Activated CD4-positive, alpha-beta T cell treated with anti-CD3 and anti-CD28 coated beads, Interleukin-2, amount 10 ng/mL, durations not matched to agents 24 days and 14 days (primary cell): ENCODE measurements at regions of chr13 and their contacts with region 1.

Region 1: GRCh38 chr13:94416454-94417080 is 62.9 kb downstream of the DCT start:
- DNase-seq: no peak
- H3K4me3 Mint-ChIP-seq: no peak overlapping the region
- H3K27ac Mint-ChIP-seq: peak overlapping the region; percentile 39
- H3K4me1 Mint-ChIP-seq: peaks cover 21% of the 10 kb centered on the region
- H3K27me3 Mint-ChIP-seq: no peaks in the 10 kb centered on the region

Region 2: DNA sequence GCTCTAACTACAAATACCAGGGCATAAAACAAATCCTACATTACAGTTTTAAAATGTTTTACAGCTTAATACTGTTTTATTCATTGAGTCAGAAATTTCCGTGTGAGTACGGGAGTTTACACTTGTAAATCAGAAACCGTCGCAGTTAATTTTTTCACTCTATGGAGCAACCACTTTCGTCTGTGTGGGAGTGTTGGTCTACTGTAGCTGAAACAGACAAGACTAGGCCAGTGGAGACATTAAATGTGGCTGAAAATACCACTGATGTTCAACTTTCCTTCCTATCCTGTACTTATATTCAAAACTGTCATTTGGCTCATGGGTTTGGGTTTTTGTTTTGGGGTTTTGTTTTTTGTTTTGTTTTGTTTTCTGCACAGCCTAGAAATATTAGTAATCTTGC is 205.8 kb before region 1 on chr13:
- intact Hi-C with region 1: no loop called
- DNase-seq: no peak
- H3K4me3 Mint-ChIP-seq: no peak overlapping the region
- H3K27ac Mint-ChIP-seq: no peak overlapping the region
- H3K4me1 Mint-ChIP-seq: no peaks in the 10 kb centered on the region
- H3K27me3 Mint-ChIP-seq: peaks cover 2% of the 10 kb centered on the region

Region 3: DNA sequence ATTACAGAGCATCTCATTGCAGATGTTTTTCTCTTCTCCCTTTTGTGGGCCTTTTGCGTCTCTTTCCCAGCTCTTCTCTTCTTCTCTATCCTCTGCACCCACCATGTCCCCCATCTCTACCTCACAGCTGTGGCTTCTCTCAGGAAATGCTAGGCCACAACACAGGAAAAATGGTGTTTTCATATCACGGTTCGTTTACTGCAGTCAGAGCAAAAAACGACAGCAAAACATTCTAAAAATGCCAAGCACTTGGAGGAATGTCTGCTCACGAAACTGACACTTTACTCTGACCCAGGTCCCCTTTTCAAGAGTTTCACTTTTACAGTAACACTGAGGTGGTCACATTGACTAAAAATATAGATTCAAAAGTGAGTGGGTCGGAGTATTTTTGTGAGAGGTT is 89.2 kb before region 1 on chr13:
- intact Hi-C with region 1: loop called (anchors 2 kb)
- DNase-seq: peak; percentile 74
- H3K4me3 Mint-ChIP-seq: peak overlapping the region; percentile 62
- H3K27ac Mint-ChIP-seq: peak overlapping the region; percentile 72
- H3K4me1 Mint-ChIP-seq: peaks cover 65% of the 10 kb centered on the region
- H3K27me3 Mint-ChIP-seq: peaks cover 2% of the 10 kb centered on the region

Region 4: GRCh38 chr13:94382517-94382916 is 34.0 kb before region 1 on chr13:
- intact Hi-C with region 1: no loop called
- DNase-seq: no peak
- H3K4me3 Mint-ChIP-seq: no peak overlapping the region
- H3K27ac Mint-ChIP-seq: no peak overlapping the region
- H3K4me1 Mint-ChIP-seq: no peaks in the 10 kb centered on the region
- H3K27me3 Mint-ChIP-seq: peaks cover 4% of the 10 kb centered on the region

Region 5: DNA sequence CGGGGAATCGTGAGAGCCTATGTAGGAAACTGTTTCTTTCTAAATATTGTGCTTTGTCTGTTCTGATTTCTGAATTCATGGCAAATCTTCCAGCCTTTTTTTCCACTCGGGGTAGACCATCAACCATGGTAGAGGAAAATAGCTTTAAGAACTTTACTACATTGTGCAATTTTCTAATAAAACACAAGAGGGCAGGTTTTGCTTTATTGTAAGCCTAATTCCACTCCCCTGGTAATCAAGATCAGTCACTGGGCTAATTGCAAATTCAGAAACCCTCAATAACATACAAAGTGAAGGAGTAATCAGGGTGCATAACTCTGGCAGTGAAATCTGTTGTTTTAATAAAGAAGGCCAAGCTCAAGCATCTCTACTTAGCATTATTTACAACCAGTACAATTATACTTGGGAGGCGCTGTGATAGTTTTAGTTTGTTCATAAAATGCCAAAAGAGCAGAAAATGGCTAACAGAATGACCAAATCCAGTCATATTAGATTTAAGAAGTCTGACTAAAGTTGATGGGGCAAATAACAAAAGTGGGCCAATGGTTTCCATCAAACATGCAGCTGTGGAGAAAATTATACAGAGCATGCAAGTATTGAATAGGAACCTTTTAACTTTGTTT is 19.1 kb after region 1 on chr13:
- intact Hi-C with region 1: loop called (anchors 2 kb)
- DNase-seq: peak; percentile 63
- H3K4me3 Mint-ChIP-seq: no peak overlapping the region
- H3K27ac Mint-ChIP-seq: no peak overlapping the region
- H3K4me1 Mint-ChIP-seq: peaks cover 9% of the 10 kb centered on the region
- H3K27me3 Mint-ChIP-seq: peaks cover 6% of the 10 kb centered on the region

Region 6: DNA sequence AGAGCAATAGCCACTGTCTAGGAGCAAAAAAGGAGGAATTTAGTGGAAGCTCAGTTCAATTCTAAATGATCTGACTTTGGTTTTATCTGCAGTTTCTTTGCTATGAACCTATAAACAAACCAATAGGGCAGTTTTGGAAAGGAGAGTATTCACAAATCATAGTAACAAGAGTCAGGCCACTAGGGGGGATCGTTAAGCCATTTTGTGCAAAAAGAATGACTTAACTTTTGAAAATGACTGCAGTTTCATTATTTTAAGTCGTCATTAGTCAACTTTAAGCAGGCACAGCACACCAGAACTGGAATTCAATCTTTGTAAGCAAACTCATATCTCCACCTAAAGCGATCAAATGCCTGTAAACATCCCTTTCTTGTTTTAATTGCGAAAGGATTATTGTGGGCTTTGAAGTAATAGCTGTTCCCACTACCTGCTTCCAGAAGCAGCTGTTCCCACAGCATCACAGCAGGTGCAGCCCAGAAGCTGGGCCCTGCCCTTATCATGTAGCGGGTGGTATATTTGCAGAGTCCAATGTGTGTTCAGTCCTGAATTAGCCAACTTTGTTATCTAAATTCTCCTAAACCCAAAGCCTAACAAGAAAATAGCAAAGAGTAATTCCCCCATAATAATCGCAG is 244.2 kb after region 1 on chr13:
- intact Hi-C with region 1: loop called (anchors 2 kb)
- DNase-seq: no peak
- H3K4me3 Mint-ChIP-seq: no peak overlapping the region
- H3K27ac Mint-ChIP-seq: no peak overlapping the region
- H3K4me1 Mint-ChIP-seq: peaks cover 35% of the 10 kb centered on the region
- H3K27me3 Mint-ChIP-seq: peaks cover 16% of the 10 kb centered on the region

Region 7: GRCh38 chr13:95301183-95301967 is 884.8 kb after region 1 on chr13 and contains the start of gene ABCC4:
- intact Hi-C with region 1: loop called (anchors 10 kb)
- DNase-seq: peak; percentile 90
- H3K4me3 Mint-ChIP-seq: peak within 1 kb of the TSS; percentile 91
- H3K27ac Mint-ChIP-seq: peak within 1 kb of the TSS; percentile 85
- H3K4me1 Mint-ChIP-seq: peaks cover 28% of the 10 kb centered on the region
- H3K27me3 Mint-ChIP-seq: peaks cover 12% of the 10 kb centered on the region
- total RNA-seq, gene ABCC4: 19.6 and 20.9 TPM in 2 replicates